ENCODE measurements at regions of chr2 and their contacts with region 1.

Region 1: DNA sequence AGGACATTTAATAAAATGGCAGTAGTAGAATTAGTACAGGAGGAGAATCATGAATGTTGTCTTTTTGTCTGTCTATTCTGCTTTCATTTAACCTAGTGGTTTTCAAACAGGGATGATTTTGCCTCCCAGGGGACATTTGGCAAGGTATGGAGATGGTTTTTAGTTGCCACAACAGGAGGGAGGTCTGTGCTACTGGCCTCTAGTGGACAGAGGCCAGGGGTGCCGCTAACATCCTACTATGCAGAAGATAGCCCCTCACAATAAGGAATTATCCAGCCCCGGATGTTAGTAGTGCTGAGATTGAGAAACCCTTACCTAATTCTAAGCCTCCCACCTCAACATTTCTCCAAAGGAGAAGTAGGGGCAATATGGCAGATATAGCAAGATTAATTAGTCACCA is 18.3 kb downstream of the FASTKD2 start:
- DNase-seq: no peak
- ATAC-seq: no peak
- H3K4me3 ChIP-seq: no peak overlapping the region
- H3K27ac ChIP-seq: no peak overlapping the region
- H3K4me1 ChIP-seq: no peaks in the 10 kb centered on the region
- H3K27me3 ChIP-seq: no peaks in the 10 kb centered on the region
- CTCF ChIP-seq: no peak
- POLR2A ChIP-seq: no peak

Region 2: GRCh38 chr2:205161156-205161839 is 1622.4 kb before region 1 on chr2:
- in situ Hi-C with region 1: no loop called
- intact Hi-C with region 1: no loop called
- DNase-seq: no peak
- ATAC-seq: no peak
- H3K4me3 ChIP-seq: no peak overlapping the region
- H3K27ac ChIP-seq: no peak overlapping the region
- H3K4me1 ChIP-seq: no peaks in the 10 kb centered on the region
- H3K27me3 ChIP-seq: no peaks in the 10 kb centered on the region
- CTCF ChIP-seq: no peak
- POLR2A ChIP-seq: no peak

Region 3: DNA sequence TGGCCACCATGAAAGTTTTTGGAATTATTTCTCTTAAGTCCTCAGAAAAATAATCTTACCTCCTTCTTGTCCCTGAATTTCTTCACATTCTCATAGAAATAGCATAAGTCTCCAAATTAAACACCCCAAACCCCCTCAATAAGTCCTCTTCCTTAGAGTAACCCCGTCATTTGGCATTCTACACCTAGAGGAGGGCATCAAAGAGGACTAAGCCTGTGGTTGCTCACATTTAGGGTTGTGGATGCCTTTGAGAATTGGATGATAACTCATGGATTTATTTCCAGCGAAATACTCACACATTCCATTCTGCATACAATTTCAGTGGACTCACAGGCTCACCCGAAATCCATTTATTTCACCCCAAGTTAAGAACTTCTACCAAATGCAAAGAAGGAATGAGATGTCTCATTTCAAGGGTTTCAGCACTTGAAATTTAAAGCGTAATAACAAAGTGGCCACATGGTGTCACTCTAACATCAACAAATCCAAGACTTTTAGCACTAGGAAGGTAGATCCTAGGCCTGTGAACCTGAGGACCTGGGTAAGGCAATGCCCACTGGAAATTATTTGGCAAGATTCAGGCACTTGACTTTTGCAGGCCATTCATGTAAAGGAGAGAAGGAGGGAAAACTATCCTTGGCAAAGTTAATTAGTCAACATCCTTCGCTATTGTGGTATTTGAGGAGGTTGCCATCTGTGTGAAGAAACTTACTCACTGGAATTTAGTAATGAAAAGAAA is 90.2 kb before region 1 on chr2:
- in situ Hi-C with region 1: no loop called
- intact Hi-C with region 1: loop called (anchors 5 kb)
- DNase-seq: no peak
- ATAC-seq: peak; percentile 68 to 73
- H3K4me3 ChIP-seq: no peak overlapping the region
- H3K27ac ChIP-seq: no peak overlapping the region
- H3K4me1 ChIP-seq: no peaks in the 10 kb centered on the region
- H3K27me3 ChIP-seq: no peaks in the 10 kb centered on the region
- CTCF ChIP-seq: peak; percentile 46 to 71 (median 62)
- POLR2A ChIP-seq: no peak